Activated B cell treated with CpG ODN at 0.5 μM for 24 hours (primary cell): ENCODE measurements at regions of chr11 and their contacts with region 1.

Region 1: DNA sequence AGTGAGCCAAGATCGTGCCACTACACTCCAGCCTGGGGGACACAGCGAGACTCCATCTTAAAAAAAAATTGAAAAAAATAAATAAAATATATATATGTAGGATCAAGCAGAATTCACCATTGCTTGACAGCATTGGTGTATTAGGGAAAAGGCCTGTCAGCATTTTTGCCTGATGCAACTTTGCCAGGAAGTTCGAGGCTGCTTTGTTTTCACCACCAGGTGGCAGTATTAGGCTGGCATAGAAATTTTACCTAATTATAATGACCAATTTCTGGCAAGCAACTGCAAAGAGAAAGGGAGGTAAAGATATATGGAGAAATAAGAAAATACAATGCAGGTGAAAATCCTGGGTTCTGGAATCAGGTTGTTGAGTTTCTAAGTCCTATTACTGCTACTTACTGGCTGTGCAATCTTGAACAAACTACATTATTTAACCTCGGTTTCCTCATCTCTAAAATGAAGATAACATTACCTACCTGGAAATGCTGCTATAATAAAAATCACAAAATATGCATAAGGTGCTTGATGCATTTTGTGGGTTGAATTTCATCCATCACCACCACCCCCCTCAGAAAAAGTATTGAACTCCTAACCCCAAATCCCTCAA is 24.7 kb downstream of the LAYN start:
- DNase-seq: no peak
- ATAC-seq: peak; percentile 28
- H3K4me3 Mint-ChIP-seq: no peak overlapping the region
- H3K27ac Mint-ChIP-seq: no peak overlapping the region
- H3K4me1 Mint-ChIP-seq: no peaks in the 10 kb centered on the region
- H3K27me3 Mint-ChIP-seq: peaks cover 2% of the 10 kb centered on the region
- CTCF ChIP-seq: peak; percentile 40

Region 2: GRCh38 chr11:110422306-110422905 is 1142.8 kb before region 1 on chr11:
- CTCF ChIA-PET with region 1: no interaction called
- POLR2A ChIA-PET with region 1: no interaction called
- intact Hi-C with region 1: no loop called
- DNase-seq: no peak
- ATAC-seq: no peak
- H3K4me3 Mint-ChIP-seq: no peak overlapping the region
- H3K27ac Mint-ChIP-seq: no peak overlapping the region
- H3K4me1 Mint-ChIP-seq: no peaks in the 10 kb centered on the region
- H3K27me3 Mint-ChIP-seq: peaks cover 8% of the 10 kb centered on the region
- CTCF ChIP-seq: no peak

Region 3: DNA sequence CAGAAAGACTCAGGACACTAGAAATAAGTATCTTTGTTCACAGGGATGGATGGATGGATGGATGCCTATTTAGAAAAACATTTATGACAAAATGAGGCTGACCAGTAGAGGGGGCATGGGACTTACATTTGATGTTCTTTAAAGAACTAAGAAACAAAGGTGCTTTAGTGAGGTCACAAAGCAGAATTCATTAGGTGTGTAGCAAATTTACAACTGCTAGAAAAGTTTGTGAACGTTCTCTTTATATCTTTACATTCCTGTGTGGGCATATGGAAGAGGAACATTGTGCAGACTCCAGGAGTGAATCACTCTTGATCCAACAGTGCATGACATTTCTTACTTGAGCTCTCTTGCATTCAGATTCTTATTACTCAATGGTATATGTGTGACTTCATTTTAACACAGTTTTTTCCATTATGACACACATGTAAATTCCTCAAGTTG is 21.2 kb after region 1 on chr11:
- CTCF ChIA-PET with region 1: interaction called, 3 read pairs
- POLR2A ChIA-PET with region 1: no interaction called
- intact Hi-C with region 1: loop called (anchors 1 kb)
- DNase-seq: no peak
- ATAC-seq: peak; percentile 61
- H3K4me3 Mint-ChIP-seq: no peak overlapping the region
- H3K27ac Mint-ChIP-seq: no peak overlapping the region
- H3K4me1 Mint-ChIP-seq: peaks cover 4% of the 10 kb centered on the region
- H3K27me3 Mint-ChIP-seq: peaks cover 2% of the 10 kb centered on the region
- CTCF ChIP-seq: peak; percentile 69

Region 4: GRCh38 chr11:111841370-111842053 is 276.3 kb after region 1 on chr11:
- CTCF ChIA-PET with region 1: interaction called, 23 read pairs
- POLR2A ChIA-PET with region 1: no interaction called
- intact Hi-C with region 1: loop called (anchors 1 kb)
- DNase-seq: peak; percentile 69
- ATAC-seq: peak; percentile 84
- H3K4me3 Mint-ChIP-seq: no peak overlapping the region
- H3K27ac Mint-ChIP-seq: no peak overlapping the region
- H3K4me1 Mint-ChIP-seq: peaks cover 2% of the 10 kb centered on the region
- H3K27me3 Mint-ChIP-seq: no peaks in the 10 kb centered on the region
- CTCF ChIP-seq: peak; percentile 86